ENCODE measurements at regions of chr3 and their contacts with region 1.

Region 1: DNA sequence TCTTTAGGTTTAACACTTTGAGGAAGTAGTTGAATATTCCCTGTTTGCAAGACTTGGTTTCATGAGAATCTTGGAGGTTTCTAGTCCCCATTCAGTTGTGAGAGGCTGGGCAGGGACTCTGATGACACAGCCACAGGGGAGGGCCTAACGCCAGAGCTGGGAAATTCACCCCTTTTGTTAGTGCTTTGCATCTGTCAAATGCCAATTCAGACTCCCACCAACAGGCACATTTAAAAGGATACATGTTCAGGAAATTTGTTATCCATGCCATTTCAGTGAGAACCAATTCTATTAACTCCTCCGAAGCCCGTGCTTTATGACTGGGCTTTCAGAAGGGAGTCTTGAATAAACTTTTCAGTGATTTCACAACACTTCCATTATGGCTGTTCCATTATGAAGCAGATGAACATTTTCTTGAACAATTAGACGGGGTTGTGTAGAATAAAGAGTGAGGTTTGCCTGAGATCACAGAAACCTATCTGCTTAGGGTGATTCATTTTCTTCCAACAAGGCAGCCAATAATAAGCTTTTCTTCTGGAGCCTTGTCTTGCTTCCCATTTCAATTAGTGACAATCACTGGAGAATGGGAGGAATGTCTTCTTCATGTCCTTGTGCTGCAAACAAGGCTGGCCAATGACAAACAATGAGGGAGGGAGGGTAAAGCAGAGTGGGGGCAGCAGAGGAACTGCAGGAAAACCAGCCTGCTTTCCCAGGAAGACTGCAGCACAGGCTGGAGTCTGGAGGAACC is 90.6 kb downstream of the SOX14 start:
- DNase-seq: no peak
- ATAC-seq: no peak
- H3K4me3 ChIP-seq: no peak overlapping the region
- H3K27ac ChIP-seq: no peak overlapping the region
- H3K4me1 ChIP-seq: no peaks in the 10 kb centered on the region
- H3K27me3 ChIP-seq: no peaks in the 10 kb centered on the region
- CTCF ChIP-seq: no peak

Region 2: GRCh38 chr3:137906985-137907640 is 52.4 kb after region 1 on chr3:
- intact Hi-C with region 1: loop called in 1 of 2 experiments (anchors 5 kb)
- DNase-seq: no peak
- ATAC-seq: no peak
- H3K4me3 ChIP-seq: no peak overlapping the region
- H3K27ac ChIP-seq: no peak overlapping the region
- H3K4me1 ChIP-seq: no peaks in the 10 kb centered on the region
- H3K27me3 ChIP-seq: no peaks in the 10 kb centered on the region
- CTCF ChIP-seq: no peak

Measured in psoas muscle (tissue), 8 donors.